Ascending aorta (tissue), 2 donors: ENCODE measurements at regions of chr1 and their contacts with region 1.

Region 1: DNA sequence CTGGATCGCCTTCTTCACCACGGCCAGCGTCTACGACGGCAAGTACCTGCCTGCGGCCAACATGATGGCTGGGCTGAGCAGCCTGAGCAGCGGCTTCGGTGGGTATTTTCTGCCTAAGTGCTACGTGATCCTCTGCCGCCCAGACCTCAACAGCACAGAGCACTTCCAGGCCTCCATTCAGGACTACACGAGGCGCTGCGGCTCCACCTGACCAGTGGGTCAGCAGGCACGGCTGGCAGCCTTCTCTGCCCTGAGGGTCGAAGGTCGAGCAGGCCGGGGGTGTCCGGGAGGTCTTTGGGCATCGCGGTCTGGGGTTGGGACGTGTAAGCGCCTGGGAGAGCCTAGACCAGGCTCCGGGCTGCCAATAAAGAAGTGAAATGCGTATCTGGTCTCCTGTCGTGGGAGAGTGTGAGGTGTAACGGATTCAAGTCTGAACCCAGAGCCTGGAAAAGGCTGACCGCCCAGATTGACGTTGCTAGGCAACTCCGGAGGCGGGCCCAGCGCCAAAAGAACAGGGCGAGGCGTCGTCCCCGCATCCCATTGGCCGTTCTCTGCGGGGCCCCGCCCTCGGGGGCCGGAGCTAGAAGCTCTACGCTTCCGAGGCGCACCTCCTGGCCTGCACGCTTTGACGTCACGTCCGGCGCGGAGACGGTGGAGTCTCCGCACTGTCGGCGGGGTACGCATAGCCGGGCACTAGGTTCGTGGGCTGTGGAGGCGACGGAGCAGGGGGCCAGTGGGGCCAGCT is at the start of gene ZBTB48:
- DNase-seq: peak; percentile 95 to 100
- H3K4me3 ChIP-seq: peak within 1 kb of the TSS; percentile 64 to 87
- H3K27ac ChIP-seq: peak within 1 kb of the TSS; percentile 92 to 94
- H3K4me1 ChIP-seq: peaks cover 14 to 23% of the 10 kb centered on the region in 2 donors
- H3K27me3 ChIP-seq: no peaks in the 10 kb centered on the region
- CTCF ChIP-seq: no peak
- total RNA-seq, gene ZBTB48: 106 TPM

Region 2: GRCh38 chr1:6148497-6149241 is 430.9 kb before region 1 on chr1:
- intact Hi-C with region 1: no loop called
- DNase-seq: no peak
- H3K4me3 ChIP-seq: peak overlapping the region in 1 of 2 donors; percentile 18
- H3K27ac ChIP-seq: no peak overlapping the region
- H3K4me1 ChIP-seq: no peaks in the 10 kb centered on the region
- H3K27me3 ChIP-seq: no peaks in the 10 kb centered on the region
- CTCF ChIP-seq: no peak

Region 3: GRCh38 chr1:6602669-6603237 is 23.2 kb after region 1 on chr1 and contains the start of gene KLHL21:
- intact Hi-C with region 1: loop called (anchors 1 kb)
- DNase-seq: peak; percentile 77 to 96
- H3K4me3 ChIP-seq: peak within 1 kb of the TSS; percentile 92 to 95
- H3K27ac ChIP-seq: peak within 1 kb of the TSS; percentile 98 to 99
- H3K4me1 ChIP-seq: peaks cover 20 to 36% of the 10 kb centered on the region in 2 donors
- H3K27me3 ChIP-seq: no peaks in the 10 kb centered on the region
- CTCF ChIP-seq: no peak
- total RNA-seq, gene KLHL21: 147 TPM

Region 4: GRCh38 chr1:6613361-6614018 is 33.9 kb after region 1 on chr1 and contains the start of gene PHF13:
- intact Hi-C with region 1: loop called (anchors 1 kb)
- DNase-seq: peak; percentile 98 to 100
- H3K4me3 ChIP-seq: peak within 1 kb of the TSS; percentile 94 to 100
- H3K27ac ChIP-seq: peak within 1 kb of the TSS; percentile 97 to 98
- H3K4me1 ChIP-seq: peaks cover 4 to 29% of the 10 kb centered on the region in 2 donors
- H3K27me3 ChIP-seq: no peaks in the 10 kb centered on the region
- CTCF ChIP-seq: no peak
- total RNA-seq, gene PHF13: 1.5 TPM

Region 5: DNA sequence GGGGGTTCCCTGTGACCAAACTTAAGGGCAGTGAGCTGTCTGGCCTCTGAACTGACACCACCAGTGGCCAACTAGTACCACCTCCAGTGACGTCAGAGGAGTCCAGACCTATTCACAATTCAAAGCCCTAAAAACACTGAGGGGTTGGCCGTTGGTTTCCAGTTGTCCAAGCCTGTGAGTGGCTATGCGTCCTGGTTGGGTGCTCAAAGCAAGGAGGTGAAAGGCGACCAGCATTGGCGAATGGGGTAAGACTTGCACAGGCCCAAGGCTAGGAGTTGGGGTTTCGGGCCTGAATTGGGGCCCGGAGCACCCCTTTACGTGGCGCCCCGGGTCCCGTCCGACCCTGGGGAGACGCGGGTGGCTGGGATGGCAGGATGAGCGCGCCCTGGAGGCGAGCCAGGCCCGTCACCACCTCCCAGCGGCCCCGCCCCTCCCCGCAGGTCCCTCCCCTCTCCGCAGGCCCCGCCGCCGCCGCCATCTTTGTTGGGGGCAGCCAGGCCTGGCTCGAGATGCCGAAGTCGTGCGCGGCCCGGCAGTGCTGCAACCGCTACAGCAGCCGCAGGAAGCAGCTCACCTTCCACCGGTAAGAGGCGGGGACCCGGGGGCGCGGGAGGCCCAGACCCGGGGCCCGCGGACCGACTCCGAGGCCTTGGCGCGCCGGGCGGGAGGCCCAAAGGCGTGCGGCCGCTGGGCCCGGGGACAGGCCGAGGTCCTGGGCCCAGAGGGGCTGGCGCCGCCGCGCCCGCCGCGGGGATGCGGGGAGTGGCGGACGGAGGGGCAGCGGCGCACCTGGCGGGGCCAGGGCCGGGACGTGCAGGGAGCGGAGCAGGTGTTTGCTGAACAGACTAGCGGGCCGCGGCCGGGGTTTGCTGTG is 45.4 kb after region 1 on chr1 and contains the start of gene THAP3:
- intact Hi-C with region 1: loop called (anchors 2 kb)
- DNase-seq: peak; percentile 37 to 91
- H3K4me3 ChIP-seq: peak within 1 kb of the TSS; percentile 87 to 88
- H3K27ac ChIP-seq: peak within 1 kb of the TSS; percentile 80 to 92
- H3K4me1 ChIP-seq: peaks cover 4 to 14% of the 10 kb centered on the region in 2 donors
- H3K27me3 ChIP-seq: no peaks in the 10 kb centered on the region
- CTCF ChIP-seq: no peak
- total RNA-seq, gene THAP3: 9.3 TPM

Region 6: DNA sequence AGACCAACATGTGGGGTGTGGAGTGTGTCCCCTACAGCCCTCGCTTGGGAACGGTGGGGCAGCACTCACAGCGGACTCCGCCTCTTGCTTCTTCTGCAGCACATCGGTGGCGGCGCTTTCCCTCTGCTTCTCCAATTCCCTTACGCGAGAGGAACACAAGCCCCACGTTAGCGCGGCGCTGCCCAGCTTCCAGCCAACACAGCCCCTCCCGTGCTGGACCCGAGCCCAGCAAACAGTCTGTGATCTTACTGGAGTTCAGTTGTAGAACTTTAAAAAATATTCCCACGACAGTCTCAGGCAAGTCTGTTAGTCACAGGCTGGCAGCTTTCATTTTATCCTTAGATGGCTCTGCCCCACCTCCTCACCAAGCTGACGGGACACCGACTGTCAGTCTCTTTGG is 58.7 kb after region 1 on chr1:
- intact Hi-C with region 1: loop called (anchors 2 kb)
- DNase-seq: peak; percentile 82 to 96
- H3K4me3 ChIP-seq: peak overlapping the region in 1 of 2 donors; percentile 44
- H3K27ac ChIP-seq: peak overlapping the region; percentile 80 to 94
- H3K4me1 ChIP-seq: peaks cover 2 to 13% of the 10 kb centered on the region in 2 donors
- H3K27me3 ChIP-seq: no peaks in the 10 kb centered on the region
- CTCF ChIP-seq: no peak